Right ventricle myocardium inferior (tissue), 1 donor: ENCODE measurements at regions of chr6 and their contacts with region 1.

Region 1: DNA sequence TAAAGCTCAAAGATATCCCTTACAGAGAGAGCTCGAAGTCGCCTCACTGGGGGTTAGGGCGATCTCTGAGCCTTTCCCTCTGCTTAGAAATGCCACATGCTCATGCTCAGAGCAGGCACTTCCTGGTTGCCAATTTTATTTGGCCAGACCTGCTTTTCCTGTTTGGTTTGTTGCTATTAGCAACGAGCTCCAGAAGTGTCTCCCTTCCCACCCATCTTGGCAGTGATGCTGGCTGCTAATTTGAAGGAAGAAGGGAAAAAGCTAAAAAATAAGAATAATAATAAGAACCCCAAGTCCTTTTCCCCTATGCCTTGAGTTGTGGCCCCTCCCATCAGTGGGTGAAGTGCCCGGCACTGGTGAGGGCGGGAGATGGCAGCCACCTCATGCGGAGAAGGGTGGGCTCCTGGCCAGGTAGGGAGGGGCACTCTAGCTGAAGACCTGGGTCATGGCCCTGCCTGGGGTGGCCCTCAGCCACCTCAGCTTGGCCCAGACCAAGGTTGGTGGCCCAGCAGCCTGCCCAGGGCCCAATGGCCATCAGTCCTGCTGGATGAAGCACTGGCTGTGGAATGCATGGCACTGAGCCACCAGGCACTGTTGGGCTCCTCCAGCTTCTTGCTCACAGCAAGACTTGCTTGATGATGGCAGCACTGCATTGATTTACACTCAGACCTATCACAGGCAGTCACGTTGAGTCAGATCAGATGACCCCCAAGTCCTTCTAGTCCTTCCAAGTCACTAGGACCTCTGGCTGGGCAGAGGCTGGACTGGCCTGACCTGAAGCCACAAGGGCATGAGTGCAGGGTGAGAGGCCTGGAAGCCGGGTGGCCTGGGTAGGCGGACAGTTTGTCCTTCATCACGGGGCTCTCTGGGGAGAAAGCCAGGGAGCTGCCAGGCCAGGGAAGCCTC is 79.0 kb downstream of the SYNJ2 start:
- DNase-seq: peak; percentile 89
- ATAC-seq: peak; percentile 79

Region 2: GRCh38 chr6:157944983-157945931 is 115.5 kb before region 1 on chr6:
- intact Hi-C with region 1: loop called (anchors 5 kb)
- DNase-seq: no peak
- ATAC-seq: no peak

Region 3: GRCh38 chr6:158231551-158232315 is 171.0 kb after region 1 on chr6:
- intact Hi-C with region 1: no loop called
- DNase-seq: peak; percentile 88
- ATAC-seq: peak; percentile 63

Region 4: GRCh38 chr6:158631678-158632537 is 571.2 kb after region 1 on chr6:
- intact Hi-C with region 1: no loop called
- DNase-seq: peak; percentile 91
- ATAC-seq: peak; percentile 92